ENCODE measurements at regions of chr9 and their contacts with region 1.

Region 1: DNA sequence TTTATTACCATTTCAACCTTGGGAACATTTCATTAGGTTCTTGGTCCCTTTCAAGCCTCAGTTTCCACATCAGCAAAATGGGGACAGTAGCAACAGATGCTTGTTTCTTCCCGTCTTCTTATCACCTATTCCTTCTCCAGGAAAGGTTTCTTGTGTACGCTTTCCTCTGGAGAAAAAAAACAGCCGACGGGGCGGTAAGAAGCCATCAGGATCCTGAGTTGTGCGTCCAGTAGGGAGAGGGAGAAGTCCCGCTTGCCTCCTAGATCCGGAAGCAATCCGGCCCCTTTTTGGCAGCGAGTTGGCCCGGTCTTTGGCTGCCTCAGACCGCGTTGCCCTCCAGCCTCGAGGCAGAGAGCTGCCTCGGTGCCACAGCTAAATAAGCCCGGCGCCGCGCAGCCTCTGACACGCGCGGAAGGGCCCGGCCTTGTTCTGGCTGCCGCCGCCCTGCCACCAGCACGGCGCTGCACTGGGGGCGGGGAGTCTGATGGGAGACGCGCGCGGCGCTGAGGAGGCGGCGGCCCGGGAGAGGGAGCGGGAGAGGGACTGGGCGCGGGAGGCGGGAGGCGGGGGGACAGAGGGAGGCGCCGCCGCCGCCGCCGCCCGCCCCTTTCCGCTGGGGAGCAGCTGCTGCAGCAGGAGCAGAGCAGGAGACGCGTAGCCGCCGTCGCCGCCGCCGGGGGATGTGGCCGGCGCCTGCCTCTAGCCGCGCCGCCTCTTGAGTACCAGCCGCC is at the start of gene SLC44A1:
- H3K4me3 ChIP-seq: peak within 1 kb of the TSS; percentile 88
- H3K27ac ChIP-seq: peak within 1 kb of the TSS; percentile 82
- H3K4me1 ChIP-seq: peaks cover 14% of the 10 kb centered on the region
- CTCF ChIP-seq: peak; percentile 65; the same call in 1 of the 2 replicates

Region 2: DNA sequence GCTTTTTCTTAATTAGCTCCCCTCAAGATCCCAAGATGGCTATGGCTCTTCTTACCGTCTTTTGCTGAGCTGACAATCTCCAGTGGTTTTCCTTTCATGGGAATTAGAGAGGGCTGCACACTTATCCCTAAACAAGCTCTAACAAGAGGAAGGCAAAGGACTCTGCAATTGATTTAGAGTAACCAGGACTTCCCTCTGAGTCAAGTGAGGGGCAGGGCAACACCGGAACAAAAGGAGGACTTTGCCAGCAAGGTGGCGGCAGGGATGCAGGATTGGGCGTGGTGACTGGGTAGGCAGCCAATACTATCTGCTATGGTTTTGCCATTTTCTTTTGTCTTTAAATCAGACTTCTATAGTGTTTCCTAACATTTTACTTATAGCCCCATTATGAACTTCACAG is 10.1 kb after region 1 on chr9:
- CTCF ChIA-PET with region 1: interaction called, 3 read pairs
- POLR2A ChIA-PET with region 1: interaction called, 16 read pairs
- H3K4me3 ChIP-seq: no peak overlapping the region
- H3K27ac ChIP-seq: no peak overlapping the region
- H3K4me1 ChIP-seq: peaks cover 6% of the 10 kb centered on the region
- CTCF ChIP-seq: no peak

Measured in HEK293 (cell line).